ENCODE measurements at regions of chr1 and their contacts with region 1.

Region 1: GRCh38 chr1:202540014-202540413 is 170.2 kb downstream of the SYT2 start:
- DNase-seq: no peak
- ATAC-seq: no peak
- H3K4me3 ChIP-seq: peak overlapping the region; percentile 94 to 100
- H3K27ac ChIP-seq: peak overlapping the region; percentile 96 to 97
- H3K4me1 ChIP-seq: no peaks in the 10 kb centered on the region
- H3K27me3 ChIP-seq: no peaks in the 10 kb centered on the region

Region 2: GRCh38 chr1:202589190-202590030 is 49.4 kb after region 1 on chr1:
- intact Hi-C with region 1: loop called (anchors 5 kb)
- DNase-seq: peak; percentile 94 to 95
- ATAC-seq: peak; percentile 89
- H3K4me3 ChIP-seq: no peak overlapping the region
- H3K27ac ChIP-seq: peak overlapping the region; percentile 72 to 91
- H3K4me1 ChIP-seq: peaks cover 7% of the 10 kb centered on the region in 2 donors
- H3K27me3 ChIP-seq: no peaks in the 10 kb centered on the region

Region 3: GRCh38 chr1:202982715-202983430 is 442.9 kb after region 1 on chr1:
- intact Hi-C with region 1: no loop called
- DNase-seq: no peak
- ATAC-seq: no peak
- H3K4me3 ChIP-seq: no peak overlapping the region
- H3K27ac ChIP-seq: no peak overlapping the region
- H3K4me1 ChIP-seq: no peaks in the 10 kb centered on the region
- H3K27me3 ChIP-seq: no peaks in the 10 kb centered on the region

Measured in aorta (tissue), 5 donors.